ENCODE measurements at regions of chr14 and their contacts with region 1.

Region 1: GRCh38 chr14:62117010-62117750 is 355.0 kb downstream of the SNAPC1 start:
- DNase-seq: no peak
- H3K4me3 ChIP-seq: peak overlapping the region; percentile 52
- CTCF ChIP-seq: peak; percentile 48

Region 2: GRCh38 chr14:61894452-61895077 is 222.6 kb before region 1 on chr14:
- CTCF ChIA-PET with region 1: interaction called, 13 read pairs
- POLR2A ChIA-PET with region 1: no interaction called
- DNase-seq: peak; percentile 34
- H3K4me3 ChIP-seq: no peak overlapping the region
- CTCF ChIP-seq: peak; percentile 81

Measured in AG04449 (cell line).